OCI-LY7 (cell line): ENCODE measurements at regions of chr21 and their contacts with region 1.

Region 1: DNA sequence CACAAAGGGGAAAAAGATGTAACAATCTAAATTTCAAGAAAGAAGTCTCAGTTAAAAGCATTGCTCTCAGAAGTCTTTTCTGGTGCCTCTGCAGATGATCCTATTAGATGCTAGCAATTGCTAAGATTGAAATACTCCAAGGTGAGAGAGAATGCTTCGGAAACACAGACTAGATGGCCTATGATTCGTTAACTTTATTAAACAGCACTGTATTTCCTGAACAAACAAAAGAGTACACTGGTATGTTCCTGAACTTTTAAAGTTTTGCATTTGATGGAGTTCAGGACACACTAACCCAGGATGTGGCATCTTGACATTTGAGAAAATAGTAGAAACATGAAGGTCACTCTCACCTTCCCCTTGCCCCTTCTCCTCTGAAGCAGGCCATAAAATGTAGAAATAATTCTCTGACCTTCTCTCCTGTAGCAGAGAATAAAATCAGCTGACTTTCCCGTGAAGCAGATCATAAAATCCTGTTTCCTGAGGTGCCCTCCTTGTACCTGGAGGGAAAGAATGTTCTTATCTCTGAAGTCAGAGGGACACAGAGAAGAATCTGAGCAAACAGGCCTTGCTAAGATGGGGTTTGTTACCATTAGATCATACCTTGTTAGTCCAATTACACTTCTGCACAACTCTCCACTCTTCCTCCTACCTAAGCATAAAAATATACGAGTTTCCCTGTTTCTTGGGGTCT is 142.9 kb upstream of the USP25 start:
- DNase-seq: no peak
- H3K4me3 ChIP-seq: no peak overlapping the region
- H3K27ac ChIP-seq: no peak overlapping the region
- H3K4me1 ChIP-seq: no peaks in the 10 kb centered on the region
- CTCF ChIP-seq: no peak

Region 2: GRCh38 chr21:14864211-14865021 is 722.5 kb before region 1 on chr21:
- CTCF ChIA-PET with region 1: no interaction called
- POLR2A ChIA-PET with region 1: no interaction called
- intact Hi-C with region 1: loop called (anchors 10 kb)
- DNase-seq: peak; percentile 9
- H3K4me3 ChIP-seq: no peak overlapping the region
- H3K27ac ChIP-seq: no peak overlapping the region
- H3K4me1 ChIP-seq: no peaks in the 10 kb centered on the region
- CTCF ChIP-seq: peak; percentile 66

Region 3: GRCh38 chr21:15520811-15521636 is 65.9 kb before region 1 on chr21:
- CTCF ChIA-PET with region 1: no interaction called
- POLR2A ChIA-PET with region 1: interaction called, 3 read pairs
- intact Hi-C with region 1: loop called (anchors 10 kb)
- DNase-seq: peak; percentile 39
- H3K4me3 ChIP-seq: no peak overlapping the region
- H3K27ac ChIP-seq: no peak overlapping the region
- H3K4me1 ChIP-seq: no peaks in the 10 kb centered on the region
- CTCF ChIP-seq: peak; percentile 65

Region 4: DNA sequence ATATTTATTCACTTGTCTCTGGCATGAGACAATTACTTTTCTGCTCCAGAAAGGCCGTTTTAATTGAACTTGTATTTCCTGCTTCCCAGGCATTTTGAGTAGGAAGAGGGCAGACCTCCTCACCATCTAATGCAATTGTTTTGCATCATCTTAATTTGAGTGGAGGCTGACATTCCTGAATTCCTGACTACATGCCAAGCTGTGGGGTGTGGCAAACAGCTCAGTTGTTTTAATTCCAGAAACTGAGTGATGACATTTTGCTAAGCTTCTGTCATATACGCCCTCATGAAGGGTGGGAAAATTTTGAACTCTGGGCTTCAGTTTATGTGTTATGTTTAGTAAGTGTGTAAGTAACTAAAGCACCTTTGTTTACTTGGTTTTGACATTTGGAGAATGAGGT is 17.5 kb after region 1 on chr21:
- CTCF ChIA-PET with region 1: no interaction called
- POLR2A ChIA-PET with region 1: no interaction called
- intact Hi-C with region 1: no loop called
- DNase-seq: no peak
- H3K4me3 ChIP-seq: no peak overlapping the region
- H3K27ac ChIP-seq: no peak overlapping the region
- H3K4me1 ChIP-seq: no peaks in the 10 kb centered on the region
- CTCF ChIP-seq: no peak